BJ (cell line): ENCODE measurements at regions of chr1 and their contacts with region 1.

Region 1: DNA sequence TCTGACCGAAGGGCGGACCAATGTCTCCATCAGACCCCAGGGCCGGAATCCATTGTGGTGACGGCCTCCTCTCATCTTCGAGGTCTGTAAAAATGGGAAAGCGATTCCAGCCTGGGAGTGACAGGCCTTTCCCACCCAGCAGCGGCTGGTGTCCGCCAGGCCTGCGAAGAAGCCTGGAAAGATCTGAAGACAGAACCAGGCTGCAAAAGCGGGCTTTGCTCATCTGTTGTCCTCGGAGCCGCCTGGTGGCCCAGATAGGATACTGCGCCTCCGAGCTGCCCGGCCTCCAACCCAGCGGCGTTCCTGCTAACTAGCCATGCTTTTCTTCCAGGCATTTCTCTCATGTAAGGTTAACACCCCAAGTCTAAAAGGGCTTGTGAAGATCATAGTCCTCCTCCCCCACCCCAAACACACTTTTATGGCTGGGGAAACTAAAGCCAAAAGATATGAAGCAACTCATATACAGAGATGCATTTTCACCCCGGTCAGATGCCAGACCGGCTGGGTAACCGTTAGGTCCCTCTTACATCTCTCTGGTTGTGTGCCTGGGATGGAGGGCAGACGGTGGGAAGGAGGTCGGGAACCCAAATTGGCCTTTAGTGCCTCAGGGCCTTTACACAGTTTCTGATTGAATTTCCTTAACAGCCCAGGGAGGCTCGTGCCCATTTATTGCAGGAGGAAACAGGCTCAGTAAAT is 1.9 kb upstream of the DHRS3 start:
- DNase-seq: no peak
- H3K4me3 ChIP-seq: peak overlapping the region; percentile 93
- H3K27me3 ChIP-seq: no peaks in the 10 kb centered on the region
- CTCF ChIP-seq: peak; percentile 98

Region 2: GRCh38 chr1:12477936-12478611 is 141.9 kb before region 1 on chr1:
- CTCF ChIA-PET with region 1: interaction called, 12 read pairs
- POLR2A ChIA-PET with region 1: interaction called, 11 read pairs
- DNase-seq: peak; percentile 99
- H3K4me3 ChIP-seq: no peak overlapping the region
- H3K27me3 ChIP-seq: no peaks in the 10 kb centered on the region
- CTCF ChIP-seq: no peak

Region 3: GRCh38 chr1:12596007-12596821 is 23.7 kb before region 1 on chr1:
- CTCF ChIA-PET with region 1: interaction called, 10 read pairs
- POLR2A ChIA-PET with region 1: interaction called, 14 read pairs
- DNase-seq: peak; percentile 95
- H3K4me3 ChIP-seq: peak overlapping the region; percentile 29
- H3K27me3 ChIP-seq: no peaks in the 10 kb centered on the region
- CTCF ChIP-seq: no peak

Region 4: DNA sequence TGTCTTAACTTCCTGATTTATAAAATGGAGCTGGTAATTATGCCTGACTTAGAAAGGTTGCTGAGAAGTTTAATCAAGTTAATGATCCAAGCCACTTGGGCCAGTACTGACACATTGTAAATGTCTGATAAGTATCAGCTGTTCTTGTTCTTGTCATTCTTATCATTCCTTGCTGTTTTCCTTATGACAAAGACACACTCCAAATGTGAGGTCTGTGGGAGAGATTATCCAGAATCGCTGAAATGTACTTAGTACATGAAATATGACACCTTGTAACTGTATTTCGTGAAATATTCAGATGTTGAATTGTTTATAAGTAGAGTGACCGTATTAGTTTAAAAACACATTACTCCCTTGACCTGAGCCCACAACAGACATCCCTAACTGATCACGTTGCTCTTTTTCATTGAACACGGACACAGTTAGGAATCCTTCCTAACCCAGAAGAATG is 30.1 kb after region 1 on chr1:
- CTCF ChIA-PET with region 1: interaction called, 10 read pairs
- POLR2A ChIA-PET with region 1: interaction called, 13 read pairs
- DNase-seq: peak; percentile 85
- H3K4me3 ChIP-seq: no peak overlapping the region
- H3K27me3 ChIP-seq: peaks cover 3% of the 10 kb centered on the region; the same call in 1 of the 2 replicates
- CTCF ChIP-seq: no peak

Region 5: GRCh38 chr1:12712076-12712475 is 92.1 kb after region 1 on chr1:
- CTCF ChIA-PET with region 1: no interaction called
- POLR2A ChIA-PET with region 1: interaction called, 17 read pairs
- DNase-seq: no peak
- H3K4me3 ChIP-seq: no peak overlapping the region
- H3K27me3 ChIP-seq: no peaks in the 10 kb centered on the region
- CTCF ChIP-seq: no peak